ENCODE measurements at regions of chr3 and their contacts with region 1.

Region 1: DNA sequence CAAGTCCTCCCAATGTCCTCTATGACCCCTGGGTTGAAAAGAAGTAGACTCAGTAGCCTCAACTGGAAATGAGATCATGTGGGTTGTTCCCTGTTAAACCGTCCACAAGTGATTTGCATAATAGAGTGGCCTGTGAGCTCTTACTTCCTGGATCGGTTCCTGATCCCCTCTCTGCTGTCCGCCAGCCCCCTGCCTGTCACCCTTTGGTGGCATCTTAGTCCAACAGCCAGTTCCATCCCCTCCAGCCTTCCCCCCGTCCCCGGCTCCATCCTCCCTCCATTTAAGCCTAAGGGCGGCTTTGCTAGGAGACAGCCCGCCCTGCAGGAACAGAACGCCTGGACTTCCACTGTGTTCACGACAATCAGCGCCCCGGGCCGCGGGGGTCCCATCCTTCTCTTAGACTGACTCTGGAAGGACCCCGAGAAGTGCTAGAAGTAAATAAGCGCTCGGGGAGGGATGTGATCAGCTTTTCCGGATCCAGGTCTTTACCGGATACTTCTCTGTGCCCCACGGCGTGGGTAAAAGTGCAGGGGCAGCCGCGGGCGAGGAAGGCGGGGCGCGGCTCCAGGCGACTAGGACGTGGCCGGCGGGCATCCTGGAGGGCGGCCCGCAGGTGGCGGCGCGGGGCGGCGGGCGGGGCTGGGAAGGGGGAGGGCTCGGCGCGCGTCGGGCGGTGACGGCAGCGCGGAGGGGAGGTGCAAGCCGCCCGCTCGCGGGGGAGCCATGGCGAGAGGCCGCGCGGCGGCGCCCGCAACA is 51.2 kb upstream of the ULK4 start:
- DNase-seq: no peak
- ATAC-seq: peak; percentile 95
- H3K4me3 ChIP-seq: peak overlapping the region; percentile 57 to 81
- H3K27ac ChIP-seq: peak overlapping the region; percentile 78
- H3K4me1 ChIP-seq: peaks cover 9% of the 10 kb centered on the region
- H3K27me3 ChIP-seq: no peaks in the 10 kb centered on the region
- CTCF ChIP-seq: no peak; the same call in 1 of the 2 replicates

Region 2: GRCh38 chr3:41592753-41593510 is 420.2 kb before region 1 on chr3:
- CTCF ChIA-PET with region 1: no interaction called
- POLR2A ChIA-PET with region 1: no interaction called
- in situ Hi-C with region 1: no loop called
- intact Hi-C with region 1: no loop called
- DNase-seq: no peak
- ATAC-seq: no peak
- H3K4me3 ChIP-seq: no peak overlapping the region
- H3K27ac ChIP-seq: no peak overlapping the region
- H3K4me1 ChIP-seq: no peaks in the 10 kb centered on the region
- H3K27me3 ChIP-seq: no peaks in the 10 kb centered on the region
- CTCF ChIP-seq: no peak

Region 3: GRCh38 chr3:41751597-41751996 is 261.5 kb before region 1 on chr3:
- CTCF ChIA-PET with region 1: no interaction called
- POLR2A ChIA-PET with region 1: no interaction called
- in situ Hi-C with region 1: no loop called
- intact Hi-C with region 1: no loop called
- DNase-seq: no peak
- ATAC-seq: no peak
- H3K4me3 ChIP-seq: no peak overlapping the region
- H3K27ac ChIP-seq: no peak overlapping the region
- H3K4me1 ChIP-seq: no peaks in the 10 kb centered on the region
- H3K27me3 ChIP-seq: no peaks in the 10 kb centered on the region
- CTCF ChIP-seq: no peak

Region 4: GRCh38 chr3:41961750-41962679 is 51.1 kb before region 1 on chr3 and contains the start of gene ULK4:
- CTCF ChIA-PET with region 1: no interaction called
- POLR2A ChIA-PET with region 1: no interaction called
- in situ Hi-C with region 1: no loop called
- intact Hi-C with region 1: loop called (anchors 5 kb)
- DNase-seq: peak; percentile 96
- ATAC-seq: peak; percentile 96
- H3K4me3 ChIP-seq: peak within 1 kb of the TSS; percentile 73 to 78
- H3K27ac ChIP-seq: peak within 1 kb of the TSS; percentile 93
- H3K4me1 ChIP-seq: peaks cover 5% of the 10 kb centered on the region; the same call in 1 of the 2 replicates
- H3K27me3 ChIP-seq: no peaks in the 10 kb centered on the region
- CTCF ChIP-seq: no peak
- total RNA-seq, gene ULK4: 14.3 TPM

Region 5: GRCh38 chr3:42096796-42097565 is 83.9 kb after region 1 on chr3:
- CTCF ChIA-PET with region 1: no interaction called
- POLR2A ChIA-PET with region 1: no interaction called
- in situ Hi-C with region 1: no loop called
- intact Hi-C with region 1: loop called (anchors 5 kb)
- DNase-seq: no peak
- ATAC-seq: 0 out of 2 replicates have a peak, but pooled peaks have one; percentile 33
- H3K4me3 ChIP-seq: no peak overlapping the region
- H3K27ac ChIP-seq: peak overlapping the region; percentile 9; the same call in 1 of the 2 replicates
- H3K4me1 ChIP-seq: peaks cover 15% of the 10 kb centered on the region
- H3K27me3 ChIP-seq: no peaks in the 10 kb centered on the region
- CTCF ChIP-seq: no peak